Ascending aorta (tissue), 2 donors: ENCODE measurements at regions of chr6 and their contacts with region 1.

Region 1: GRCh38 chr6:133952815-133953633 is at the start of gene TBPL1:
- DNase-seq: peak; percentile 85 to 97
- H3K4me3 ChIP-seq: peak within 1 kb of the TSS; percentile 78 to 83
- H3K27ac ChIP-seq: peak within 1 kb of the TSS; percentile 96 to 97
- H3K4me1 ChIP-seq: peaks cover 0 to 9% of the 10 kb centered on the region in 2 donors
- H3K27me3 ChIP-seq: no peaks in the 10 kb centered on the region
- CTCF ChIP-seq: no peak
- total RNA-seq, gene TBPL1: 23.1 TPM

Region 2: DNA sequence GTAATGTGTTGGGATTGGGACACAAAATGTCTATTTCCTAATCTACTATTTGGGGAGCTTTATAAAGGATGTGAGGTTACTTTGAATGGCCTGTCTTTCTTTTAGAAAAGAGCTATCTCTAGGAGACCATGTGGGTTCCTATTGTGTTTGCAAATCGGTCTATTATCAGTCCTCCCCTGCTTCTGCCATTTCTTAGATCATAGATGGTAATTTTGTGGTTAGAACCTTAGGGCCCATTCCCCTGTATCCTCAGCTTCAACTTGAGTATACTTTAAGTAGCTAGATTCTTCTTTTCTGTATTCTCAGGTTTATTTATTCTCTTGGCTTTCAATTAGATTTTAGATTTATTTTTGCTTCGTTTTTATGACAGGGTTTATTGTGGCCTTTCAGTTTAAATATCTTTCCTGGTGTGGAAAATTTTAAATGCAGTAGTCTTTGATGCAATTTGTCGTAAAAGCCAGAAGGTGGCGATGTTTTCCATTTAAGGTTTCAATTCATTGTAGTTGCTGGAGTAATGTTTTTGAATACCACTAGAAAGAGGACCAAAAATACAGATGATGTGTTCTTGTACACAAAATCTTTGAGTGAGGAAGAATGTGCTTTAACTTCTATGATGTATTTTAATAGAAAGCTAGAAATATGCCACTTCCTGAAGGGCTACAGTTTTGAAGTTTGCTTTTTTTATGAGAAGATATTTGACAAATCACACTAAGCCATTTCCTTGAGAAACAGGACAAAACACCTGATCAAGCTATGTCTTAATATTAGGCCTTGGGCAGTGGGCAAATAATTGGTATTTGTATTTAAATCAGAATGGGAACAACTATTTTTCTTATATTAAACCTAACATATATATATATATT is 20.3 kb after region 1 on chr6:
- intact Hi-C with region 1: loop called (anchors 2 kb)
- DNase-seq: no peak
- H3K4me3 ChIP-seq: no peak overlapping the region
- H3K27ac ChIP-seq: peak overlapping the region in 1 of 2 donors; percentile 4
- H3K4me1 ChIP-seq: peaks cover 0 to 6% of the 10 kb centered on the region in 2 donors
- H3K27me3 ChIP-seq: no peaks in the 10 kb centered on the region
- CTCF ChIP-seq: peak in 2 of 3 experiments; percentile 76 to 77

Region 3: DNA sequence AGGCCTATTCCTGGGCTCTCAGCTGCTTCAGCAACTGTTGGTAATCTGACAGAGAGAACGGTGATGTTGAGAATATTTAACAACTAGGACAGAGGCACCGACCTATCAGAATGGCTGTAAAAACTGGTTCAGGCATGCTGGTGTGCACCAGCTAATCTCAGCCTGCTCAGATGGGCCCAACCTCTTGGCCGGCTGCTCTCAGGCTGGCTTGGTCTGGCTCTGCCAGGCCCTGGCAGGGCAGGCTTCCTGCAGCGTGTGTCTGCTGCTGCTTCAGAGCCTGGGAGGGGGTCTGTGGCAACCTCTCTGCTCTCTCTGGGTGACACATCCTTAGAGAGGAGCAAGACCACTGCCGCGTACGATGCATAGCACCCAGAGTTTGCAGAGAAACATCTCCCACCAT is 94.6 kb after region 1 on chr6:
- intact Hi-C with region 1: loop called (anchors 2 kb)
- DNase-seq: no peak
- H3K4me3 ChIP-seq: no peak overlapping the region
- H3K27ac ChIP-seq: peak overlapping the region; percentile 17 to 55
- H3K4me1 ChIP-seq: peaks cover 0 to 14% of the 10 kb centered on the region in 2 donors
- H3K27me3 ChIP-seq: no peaks in the 10 kb centered on the region
- CTCF ChIP-seq: no peak

Region 4: GRCh38 chr6:135054569-135055498 is 1101.8 kb after region 1 on chr6 and contains the start of gene HBS1L:
- intact Hi-C with region 1: loop called (anchors 10 kb)
- DNase-seq: peak; percentile 84 to 98
- H3K4me3 ChIP-seq: peak within 1 kb of the TSS; percentile 87 to 94
- H3K27ac ChIP-seq: peak within 1 kb of the TSS; percentile 87 to 90
- H3K4me1 ChIP-seq: no peaks in the 10 kb centered on the region
- H3K27me3 ChIP-seq: no peaks in the 10 kb centered on the region
- CTCF ChIP-seq: no peak
- total RNA-seq, gene HBS1L: 9.8 TPM